Activated CD4-positive, alpha-beta memory T cell treated with anti-CD3 and anti-CD28 coated beads, Interleukin-2, amount 10 ng/mL, durations not matched to agents 7 days and 5 days (primary cell): ENCODE measurements at regions of chr1 and their contacts with region 1.

Region 1: GRCh38 chr1:87074001-87074795 is 159.8 kb downstream of the HS2ST1 start:
- DNase-seq: no peak
- H3K4me3 Mint-ChIP-seq: no peak overlapping the region
- H3K27ac Mint-ChIP-seq: no peak overlapping the region
- H3K4me1 Mint-ChIP-seq: peaks cover 4% of the 10 kb centered on the region
- H3K27me3 Mint-ChIP-seq: no peaks in the 10 kb centered on the region

Region 2: DNA sequence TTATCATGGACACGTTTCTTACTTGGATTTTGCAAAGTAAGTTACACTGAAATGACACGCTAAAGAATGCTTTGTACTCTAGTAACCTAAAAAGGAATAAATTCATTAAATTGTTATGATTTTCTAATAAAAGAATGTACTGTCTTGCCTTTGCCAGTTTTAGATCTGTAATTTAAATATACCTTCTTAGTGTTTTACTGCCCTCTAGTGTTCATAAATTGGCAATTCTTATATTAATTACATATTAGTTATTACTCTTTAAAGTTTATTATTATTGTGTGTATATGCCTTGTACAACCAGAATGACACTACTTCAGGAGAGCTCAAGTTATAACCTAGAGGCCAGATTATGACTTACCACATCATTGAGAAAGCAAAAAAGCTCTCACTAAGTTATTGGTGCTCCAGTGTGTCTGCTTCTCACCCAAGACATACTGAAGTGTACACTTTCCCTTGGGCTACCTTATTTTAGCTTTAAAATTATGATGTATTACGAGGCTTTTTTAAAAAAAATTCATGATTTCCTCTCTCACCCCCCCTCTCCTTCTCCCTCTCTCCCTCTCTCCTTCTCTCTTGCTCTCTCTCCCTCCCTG is 10.1 kb after region 1 on chr1:
- CTCF ChIA-PET with region 1: interaction called, 14 read pairs
- POLR2A ChIA-PET with region 1: no interaction called
- DNase-seq: no peak
- H3K4me3 Mint-ChIP-seq: no peak overlapping the region
- H3K27ac Mint-ChIP-seq: no peak overlapping the region
- H3K4me1 Mint-ChIP-seq: peaks cover 6% of the 10 kb centered on the region
- H3K27me3 Mint-ChIP-seq: no peaks in the 10 kb centered on the region